Activated CD4-positive, alpha-beta memory T cell treated with anti-CD3 and anti-CD28 coated beads for 36 hours (primary cell): ENCODE measurements at regions of chr5 and their contacts with region 1.

Region 1: DNA sequence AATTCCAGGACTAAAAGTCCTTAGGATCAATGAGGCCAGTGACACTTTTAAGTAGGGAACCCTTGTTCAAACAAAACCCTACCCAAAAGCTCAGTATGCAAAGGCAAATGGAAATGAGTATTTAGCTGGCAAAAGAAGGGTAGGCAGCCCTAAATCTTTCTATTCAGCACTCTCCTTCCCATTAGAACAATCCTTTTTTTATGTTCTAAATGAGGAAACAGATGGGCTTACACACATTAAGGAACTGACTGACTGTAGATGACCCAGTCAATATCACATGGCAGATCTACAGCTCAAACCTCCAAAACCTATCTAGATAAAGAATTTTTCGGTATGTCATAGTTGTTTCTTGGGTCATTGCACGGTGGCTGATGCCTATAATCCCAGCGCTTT is 7.2 kb downstream of the CSNK1A1 start:
- DNase-seq: no peak
- H3K4me3 Mint-ChIP-seq: no peak overlapping the region
- H3K27ac Mint-ChIP-seq: no peak overlapping the region
- H3K4me1 Mint-ChIP-seq: peaks cover 80% of the 10 kb centered on the region
- H3K27me3 Mint-ChIP-seq: no peaks in the 10 kb centered on the region

Region 2: DNA sequence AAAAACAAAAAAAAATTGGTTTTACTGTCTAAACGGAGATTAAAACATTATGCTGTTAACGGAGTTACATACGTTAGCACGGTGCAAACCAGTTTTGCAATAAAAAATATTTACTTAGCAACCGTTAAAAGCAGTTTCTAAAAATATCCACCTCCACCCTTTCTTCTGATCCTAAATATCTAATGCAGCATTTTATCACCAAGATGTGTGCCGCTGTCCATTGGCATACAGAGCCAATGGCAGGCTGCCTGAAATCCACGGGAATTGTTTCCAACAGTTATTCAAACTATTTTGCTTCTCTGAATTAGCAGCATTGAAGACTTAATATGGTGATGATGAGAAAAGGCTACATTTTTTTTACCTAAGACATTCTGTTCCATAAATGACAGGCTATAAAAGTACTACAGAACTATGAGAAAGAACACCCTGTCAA is 54.4 kb before region 1 on chr5:
- CTCF ChIA-PET with region 1: no interaction called
- POLR2A ChIA-PET with region 1: no interaction called
- intact Hi-C with region 1: loop called (anchors 5 kb)
- DNase-seq: no peak
- H3K4me3 Mint-ChIP-seq: no peak overlapping the region
- H3K27ac Mint-ChIP-seq: no peak overlapping the region
- H3K4me1 Mint-ChIP-seq: peaks cover 4% of the 10 kb centered on the region
- H3K27me3 Mint-ChIP-seq: no peaks in the 10 kb centered on the region